ENCODE measurements at regions of chr22 and their contacts with region 1.

Region 1: DNA sequence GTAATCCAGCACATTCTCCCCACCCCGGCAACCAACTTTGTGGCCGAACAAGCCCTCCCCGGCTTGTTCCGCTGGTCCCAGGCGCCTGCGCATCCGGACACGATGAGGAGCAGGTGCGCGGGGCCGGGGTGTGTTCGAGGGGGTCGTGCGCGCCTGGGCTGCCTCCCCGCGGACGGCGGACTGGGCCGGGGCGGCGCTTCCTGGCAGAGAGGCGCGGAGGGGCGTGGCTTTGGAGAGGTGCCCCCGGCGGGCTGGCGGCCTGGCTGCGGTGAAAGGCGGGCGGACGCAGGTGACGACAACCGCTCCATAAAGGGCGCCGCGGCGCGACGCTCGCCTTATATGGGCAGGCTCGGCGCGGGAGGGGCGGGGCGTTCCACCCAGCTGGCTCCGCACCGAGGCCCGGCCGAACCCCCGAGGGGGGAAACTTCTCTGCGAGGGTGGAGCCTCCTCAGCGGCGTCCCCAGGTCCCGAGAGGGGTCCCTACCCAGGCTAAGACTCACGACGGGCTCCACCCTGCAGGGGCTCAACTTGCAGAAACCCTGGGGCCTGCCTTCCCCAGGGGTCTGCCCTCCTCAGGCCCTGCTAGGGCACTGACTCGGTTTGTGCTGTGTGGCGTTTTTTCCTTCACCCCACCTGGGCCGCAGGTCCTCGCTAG is 26.4 kb downstream of the TXN2 start:
- DNase-seq: peak; percentile 97
- H3K4me3 Mint-ChIP-seq: peak overlapping the region; percentile 74
- H3K27ac Mint-ChIP-seq: peak overlapping the region; percentile 77
- H3K4me1 Mint-ChIP-seq: peaks cover 39% of the 10 kb centered on the region
- H3K27me3 Mint-ChIP-seq: no peaks in the 10 kb centered on the region

Region 2: GRCh38 chr22:36365020-36365411 is 90.0 kb before region 1 on chr22:
- CTCF ChIA-PET with region 1: interaction called, 3 read pairs
- POLR2A ChIA-PET with region 1: interaction called, 6 read pairs
- intact Hi-C with region 1: loop called (anchors 1 kb)
- DNase-seq: peak; percentile 95
- H3K4me3 Mint-ChIP-seq: peak overlapping the region; percentile 60
- H3K27ac Mint-ChIP-seq: peak overlapping the region; percentile 85
- H3K4me1 Mint-ChIP-seq: peaks cover 95% of the 10 kb centered on the region
- H3K27me3 Mint-ChIP-seq: no peaks in the 10 kb centered on the region

Region 3: DNA sequence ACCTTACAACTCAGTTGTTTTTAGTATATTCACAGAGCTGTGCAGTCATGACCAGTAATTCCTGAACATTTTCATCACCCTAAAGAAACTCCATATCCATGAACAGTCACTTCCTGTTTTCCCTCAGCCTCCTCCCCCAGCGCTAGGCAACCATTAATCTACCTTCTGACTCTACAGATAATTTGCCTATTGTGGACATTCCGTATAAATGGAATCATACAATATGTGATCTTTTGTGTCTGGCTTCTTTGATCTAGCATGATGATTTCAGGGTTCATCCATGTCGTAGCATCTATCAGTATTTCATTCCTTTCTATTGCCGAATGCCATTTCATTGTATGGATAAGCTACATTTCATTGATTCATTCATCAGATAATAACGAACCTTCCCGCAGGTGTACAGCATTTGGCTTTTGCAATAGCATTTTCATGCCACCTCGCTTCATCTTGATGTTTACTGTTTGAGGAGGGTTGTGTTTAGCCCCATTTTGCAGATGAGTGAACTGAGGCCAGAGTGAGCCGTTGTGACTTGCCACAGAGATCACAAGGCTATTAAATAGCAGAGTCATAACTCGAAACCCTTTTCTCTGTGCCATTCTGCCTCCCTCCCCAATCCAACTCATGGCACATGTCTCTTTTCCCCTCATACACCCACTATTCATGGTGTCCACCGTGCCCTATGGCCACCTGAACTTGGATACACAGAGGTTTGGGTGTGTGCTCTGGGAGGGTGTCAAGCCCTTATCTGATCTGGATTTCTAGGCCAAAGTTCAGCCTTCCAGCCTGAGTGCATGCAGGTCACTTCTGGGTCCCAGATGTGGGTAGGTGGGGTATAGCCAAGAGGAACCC is 56.2 kb before region 1 on chr22:
- CTCF ChIA-PET with region 1: no interaction called
- POLR2A ChIA-PET with region 1: no interaction called
- intact Hi-C with region 1: no loop called
- DNase-seq: no peak
- H3K4me3 Mint-ChIP-seq: no peak overlapping the region
- H3K27ac Mint-ChIP-seq: no peak overlapping the region
- H3K4me1 Mint-ChIP-seq: peaks cover 21% of the 10 kb centered on the region
- H3K27me3 Mint-ChIP-seq: no peaks in the 10 kb centered on the region

Region 4: DNA sequence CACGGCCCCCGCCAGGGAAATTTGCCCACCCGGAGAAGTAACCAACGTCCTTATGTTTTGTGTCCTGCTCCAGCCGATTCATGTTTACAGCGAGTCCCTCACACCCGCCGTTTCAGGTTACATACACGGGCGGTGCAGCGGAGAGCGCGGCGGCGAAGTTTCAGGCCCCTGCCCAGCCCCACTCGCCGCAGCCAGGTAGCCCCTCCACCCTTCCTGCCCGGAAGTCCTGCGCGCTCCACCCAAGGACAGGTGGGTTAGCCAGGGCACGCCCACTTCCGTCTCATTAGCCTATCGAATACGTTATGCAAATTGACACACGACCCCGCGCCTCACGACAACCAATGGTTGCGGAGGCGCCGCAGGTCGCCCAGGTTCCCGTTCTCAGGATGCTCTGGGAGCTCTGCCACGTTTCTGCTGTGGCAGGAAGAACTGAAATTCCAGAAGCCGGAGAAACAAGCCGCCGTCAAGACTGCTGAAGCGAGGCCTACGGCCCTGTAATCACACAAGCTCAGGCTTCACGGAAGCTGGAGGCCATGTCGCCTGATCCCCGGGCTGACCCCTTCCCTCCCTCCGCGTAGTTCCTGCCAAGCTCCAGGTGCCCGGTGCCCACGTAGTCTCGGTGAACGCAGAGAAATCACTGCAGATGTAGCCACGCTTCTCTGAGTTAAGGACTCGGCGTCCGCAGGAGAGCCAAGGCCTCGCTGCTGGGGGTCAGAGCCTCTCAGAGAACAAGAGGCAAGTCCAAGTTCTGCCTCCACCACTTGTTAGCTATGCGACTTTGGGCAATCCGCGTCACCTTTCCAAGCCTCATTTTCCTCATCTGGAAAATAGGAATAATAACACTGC is 44.9 kb before region 1 on chr22:
- CTCF ChIA-PET with region 1: no interaction called
- POLR2A ChIA-PET with region 1: no interaction called
- intact Hi-C with region 1: loop called (anchors 5 kb)
- DNase-seq: peak; percentile 83
- H3K4me3 Mint-ChIP-seq: peak overlapping the region; percentile 76
- H3K27ac Mint-ChIP-seq: peak overlapping the region; percentile 66
- H3K4me1 Mint-ChIP-seq: peaks cover 37% of the 10 kb centered on the region
- H3K27me3 Mint-ChIP-seq: no peaks in the 10 kb centered on the region

Region 5: DNA sequence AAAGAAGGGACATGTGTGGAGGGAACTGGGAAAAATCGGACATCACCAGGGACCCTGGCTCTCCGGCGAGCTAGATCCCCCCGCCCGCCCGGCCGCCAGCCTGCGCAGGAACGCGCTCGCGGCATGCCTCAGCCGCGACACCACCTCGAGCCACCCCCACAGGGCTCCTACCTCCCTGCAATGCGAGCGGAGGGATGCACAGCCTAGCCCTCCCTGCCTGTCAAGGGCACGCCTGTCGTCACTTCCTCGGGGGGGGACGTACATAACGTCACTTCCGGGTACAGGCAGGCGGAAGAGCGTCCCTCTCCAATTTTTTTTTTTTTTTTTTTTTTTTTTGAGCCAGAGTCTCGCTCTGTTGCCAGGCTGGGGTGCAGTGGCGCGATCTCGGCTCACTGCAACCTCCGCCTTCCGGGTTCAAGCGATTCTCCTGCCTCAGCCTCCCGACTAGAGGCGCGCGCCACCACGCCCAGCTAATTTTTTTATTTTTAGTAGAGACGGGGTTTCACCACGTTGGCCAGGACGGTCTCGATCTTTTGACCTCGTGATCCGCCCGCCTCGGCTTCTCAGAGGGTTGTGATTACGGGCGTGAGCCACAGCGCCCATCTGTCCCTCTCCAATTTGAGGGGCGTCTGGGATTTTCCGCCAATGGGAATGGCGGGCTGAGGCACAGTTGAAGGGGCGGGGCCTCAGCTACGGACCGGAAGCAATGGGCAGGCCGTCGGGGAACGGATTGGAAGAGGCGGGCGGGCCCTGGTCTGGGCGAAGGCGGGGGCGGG is 26.5 kb after region 1 on chr22 and contains the start of gene TXN2:
- CTCF ChIA-PET with region 1: interaction called, 5 read pairs
- POLR2A ChIA-PET with region 1: no interaction called
- intact Hi-C with region 1: loop called (anchors 2 kb)
- DNase-seq: peak; percentile 96
- H3K4me3 Mint-ChIP-seq: peak within 1 kb of the TSS; percentile 100
- H3K27ac Mint-ChIP-seq: peak within 1 kb of the TSS; percentile 96
- H3K4me1 Mint-ChIP-seq: peaks cover 15% of the 10 kb centered on the region
- H3K27me3 Mint-ChIP-seq: no peaks in the 10 kb centered on the region
- total RNA-seq, gene TXN2: 94.3 to 97.0 TPM